Activated CD4-positive, alpha-beta memory T cell treated with anti-CD3 and anti-CD28 coated beads, Interleukin-2, amount 10 ng/mL, durations not matched to agents 7 days and 5 days (primary cell): ENCODE measurements at regions of chr14 and their contacts with region 1.

Region 1: GRCh38 chr14:73825551-73826188 is 26.0 kb upstream of the PTGR2 start:
- DNase-seq: peak; percentile 82
- H3K4me3 Mint-ChIP-seq: no peak overlapping the region
- H3K27ac Mint-ChIP-seq: no peak overlapping the region
- H3K4me1 Mint-ChIP-seq: peaks cover 24% of the 10 kb centered on the region
- H3K27me3 Mint-ChIP-seq: peaks cover 5% of the 10 kb centered on the region

Region 2: DNA sequence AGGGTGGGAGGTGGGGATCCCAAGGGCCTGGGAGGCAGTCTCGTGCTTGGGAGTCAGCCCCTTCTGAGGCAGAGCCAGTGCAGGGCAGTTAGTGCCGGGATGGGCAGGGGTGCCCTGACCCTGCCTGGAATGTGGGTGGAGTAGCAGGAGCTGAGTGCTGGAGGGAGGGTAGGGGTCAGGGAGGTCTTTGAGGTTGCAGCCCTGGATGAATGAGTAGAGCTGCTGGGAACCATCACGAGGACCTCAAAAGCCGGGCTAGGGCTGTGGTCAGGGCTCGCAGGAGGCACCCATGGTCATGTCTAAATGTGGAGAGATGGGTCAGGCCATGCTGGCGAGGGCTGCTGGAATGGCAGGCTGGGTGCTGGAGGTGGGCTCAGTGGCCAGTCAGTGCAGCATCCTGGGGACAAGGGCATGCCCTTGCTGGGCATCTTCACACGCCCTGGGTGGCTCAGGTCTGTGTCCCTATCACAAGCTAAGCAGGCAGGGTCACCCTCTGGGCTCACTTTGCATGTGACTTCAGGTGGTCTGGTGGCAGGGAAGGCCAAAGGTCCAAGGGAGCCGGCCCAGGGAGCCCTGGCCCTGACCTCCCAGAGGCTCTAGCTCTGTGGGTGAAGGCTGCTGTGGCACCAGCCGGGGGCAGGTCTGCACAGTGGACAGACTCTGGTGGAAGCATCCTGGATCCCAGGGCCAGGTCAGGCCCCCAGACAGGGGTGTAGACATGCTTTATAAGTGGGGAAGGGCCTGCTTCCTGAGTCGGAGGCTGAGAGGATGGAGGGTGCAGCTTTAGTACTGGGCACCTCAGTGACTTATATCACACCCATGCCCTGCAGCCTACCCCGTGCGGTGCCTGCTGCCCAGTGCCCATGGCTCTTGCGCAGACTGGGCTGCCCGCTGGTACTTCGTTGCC is 563.9 kb before region 1 on chr14:
- CTCF ChIA-PET with region 1: no interaction called
- POLR2A ChIA-PET with region 1: no interaction called
- DNase-seq: no peak
- H3K4me3 Mint-ChIP-seq: no peak overlapping the region
- H3K27ac Mint-ChIP-seq: no peak overlapping the region
- H3K4me1 Mint-ChIP-seq: peaks cover 3% of the 10 kb centered on the region
- H3K27me3 Mint-ChIP-seq: peaks cover 8% of the 10 kb centered on the region

Region 3: DNA sequence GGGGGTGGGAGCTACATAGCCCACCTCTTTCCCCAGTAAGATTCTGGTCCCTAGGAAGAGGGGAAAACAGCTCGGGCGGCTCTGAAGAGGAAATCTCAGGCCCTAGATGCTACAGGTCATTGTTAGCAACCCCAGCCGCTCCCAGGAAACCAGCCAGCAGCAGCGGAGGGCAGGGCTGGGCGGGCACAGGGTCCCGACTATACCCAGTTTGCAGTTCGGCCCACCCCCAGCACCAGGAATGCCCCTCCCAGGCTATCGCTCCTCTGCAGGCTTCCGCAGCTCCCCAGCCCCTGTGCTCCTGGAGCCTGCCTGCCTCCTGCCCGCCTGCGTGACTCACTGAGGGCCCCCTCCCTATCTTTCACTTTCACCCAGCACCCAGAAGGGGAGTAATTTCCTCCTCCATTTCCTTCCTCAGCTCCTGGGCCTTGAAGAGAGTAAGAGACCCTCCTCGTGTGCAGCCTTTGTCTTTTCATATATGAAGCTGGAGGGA is 84.2 kb before region 1 on chr14:
- CTCF ChIA-PET with region 1: interaction called, 24 read pairs
- POLR2A ChIA-PET with region 1: interaction called, 3 read pairs
- DNase-seq: peak; percentile 75
- H3K4me3 Mint-ChIP-seq: peak overlapping the region; percentile 76
- H3K27ac Mint-ChIP-seq: peak overlapping the region; percentile 98
- H3K4me1 Mint-ChIP-seq: peaks cover 74% of the 10 kb centered on the region
- H3K27me3 Mint-ChIP-seq: no peaks in the 10 kb centered on the region

Region 4: DNA sequence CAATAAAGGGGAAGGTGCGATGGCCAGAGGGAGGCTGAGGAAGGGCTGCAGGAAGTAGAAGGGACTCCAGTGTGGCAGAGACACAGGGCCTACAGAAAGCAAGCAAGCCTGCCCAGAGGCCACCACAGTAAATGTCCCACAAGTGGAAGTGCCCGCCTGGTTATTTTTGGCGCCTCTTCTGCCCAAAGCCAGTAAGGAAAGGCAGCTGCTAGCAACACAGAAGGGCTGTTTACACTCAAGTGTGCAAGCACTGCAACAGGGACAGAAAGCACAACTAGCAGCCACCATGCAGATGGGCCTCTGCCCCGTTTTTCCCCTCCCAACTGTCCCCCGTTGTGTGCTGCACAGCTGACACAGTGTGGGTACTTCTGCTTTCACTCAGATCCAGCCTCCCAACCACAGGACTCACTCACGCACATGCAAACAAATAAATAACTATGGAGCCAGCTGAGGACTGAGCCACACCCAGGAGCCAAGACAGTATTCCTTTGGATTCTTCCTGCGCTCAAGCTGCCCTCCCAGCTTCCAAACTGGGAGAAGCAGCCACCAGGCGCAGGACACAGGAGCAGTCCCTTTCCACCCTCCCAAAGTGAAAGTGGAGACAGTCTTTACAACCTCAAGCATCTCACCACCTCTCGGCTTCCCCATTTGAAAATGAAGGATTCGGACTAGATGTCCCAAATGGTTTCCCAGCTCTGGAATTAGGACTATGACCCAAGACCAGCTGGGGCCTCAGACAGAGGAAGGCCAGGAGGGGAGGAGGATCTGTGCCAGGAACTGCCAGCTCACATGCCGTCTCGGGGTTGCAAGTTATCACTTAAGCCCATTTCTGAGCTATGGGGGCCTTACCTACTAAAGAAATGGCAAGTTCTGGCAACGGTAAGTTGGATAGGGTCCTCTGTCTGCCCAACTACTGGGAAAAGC is 71.4 kb before region 1 on chr14:
- CTCF ChIA-PET with region 1: interaction called, 12 read pairs
- POLR2A ChIA-PET with region 1: interaction called, 6 read pairs
- DNase-seq: peak; percentile 67
- H3K4me3 Mint-ChIP-seq: peak overlapping the region; percentile 86
- H3K27ac Mint-ChIP-seq: peak overlapping the region; percentile 82
- H3K4me1 Mint-ChIP-seq: peaks cover 95% of the 10 kb centered on the region
- H3K27me3 Mint-ChIP-seq: no peaks in the 10 kb centered on the region